ENCODE measurements at regions of chr9 and their contacts with region 1.

Region 1: DNA sequence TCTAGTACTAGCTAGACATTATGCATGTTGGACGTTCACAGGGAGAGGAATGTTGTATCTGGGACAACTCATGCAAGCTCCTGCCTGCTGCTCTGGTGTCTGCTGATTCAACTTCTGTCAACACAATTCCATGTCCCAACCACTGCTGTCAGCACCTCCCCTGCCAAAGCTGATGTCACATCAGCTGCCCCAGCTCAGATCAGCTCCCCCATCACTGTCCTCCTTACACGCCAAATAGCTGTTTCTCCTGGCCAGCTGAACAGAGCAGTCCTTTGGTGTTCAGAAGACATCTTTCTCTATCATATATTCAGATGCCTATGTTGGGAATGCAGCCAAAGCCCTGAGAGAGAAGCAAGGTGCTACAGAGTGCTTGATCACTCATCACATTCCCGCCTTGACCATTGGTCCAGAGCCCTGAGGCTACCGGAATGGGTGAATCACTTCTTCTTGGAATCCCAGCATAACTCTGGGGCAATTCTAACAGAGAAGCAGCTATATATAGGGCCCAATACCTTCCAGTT is 223.3 kb downstream of the SEC61B start:
- DNase-seq: peak in 7 of 10 donors; percentile 17 to 89 (median 36)

Region 2: GRCh38 chr9:99356512-99356971 is 88.9 kb before region 1 on chr9:
- intact Hi-C with region 1: loop called (anchors 5 kb)
- DNase-seq: peak in 2 of 10 donors; percentile 20 to 85

Region 3: DNA sequence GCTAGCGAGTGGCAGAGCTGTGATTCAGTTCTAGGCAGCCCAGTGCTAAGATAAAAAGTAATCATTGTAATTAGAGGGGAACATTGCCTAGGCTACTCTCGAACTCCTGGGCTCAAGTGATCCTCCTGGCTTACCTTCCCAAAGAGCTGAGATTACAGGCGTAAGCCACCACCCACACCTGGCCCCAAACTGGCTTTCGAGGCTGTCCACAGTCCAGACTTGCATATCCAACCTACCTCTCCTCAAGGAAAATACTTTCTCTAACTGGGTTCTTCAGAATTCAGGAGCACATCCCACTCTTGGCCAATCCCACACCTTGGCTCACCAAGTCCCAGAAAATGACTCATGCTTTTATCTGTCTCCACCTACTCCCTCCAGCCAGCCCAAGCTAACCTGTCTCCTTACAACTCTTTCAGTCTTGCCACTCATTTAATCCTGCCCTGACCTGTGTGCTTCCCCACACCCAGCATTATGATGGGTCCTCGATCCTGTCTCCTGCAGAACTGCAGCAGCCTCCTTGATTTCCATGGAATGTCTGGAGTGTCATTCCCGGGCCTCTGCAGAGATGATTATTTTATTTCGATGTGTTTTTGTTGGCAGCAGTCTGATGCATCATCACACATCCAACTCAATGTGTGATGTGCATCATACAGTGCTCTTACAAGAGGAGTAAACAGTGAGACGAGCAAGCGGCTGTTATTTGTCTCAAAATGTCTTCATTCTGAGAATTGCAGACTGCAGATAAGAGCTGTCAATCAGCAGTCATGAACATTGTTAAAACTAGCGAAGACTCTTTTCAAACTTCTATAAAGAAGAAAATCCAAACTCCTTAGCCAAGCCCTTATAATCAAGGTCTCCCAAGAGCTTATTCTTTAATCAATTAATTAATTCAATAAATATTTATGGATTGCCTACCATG is 56.1 kb before region 1 on chr9:
- intact Hi-C with region 1: loop called (anchors 5 kb)
- DNase-seq: peak in 3 of 10 donors; percentile 19 to 88 (median 80)

Measured in posterior cingulate gyrus (tissue), 11 donors.